Naive thymus-derived CD4-positive, alpha-beta T cell (primary cell): ENCODE measurements at regions of chr21 and their contacts with region 1.

Region 1: GRCh38 chr21:41283211-41283818 is 33.3 kb upstream of the FAM3B start:
- DNase-seq: peak in 7 of 9 donors; percentile 38 to 77 (median 67)
- ATAC-seq: peak; percentile 97
- H3K4me3 ChIP-seq: no peak overlapping the region
- H3K4me3 Mint-ChIP-seq: no peak overlapping the region
- H3K27ac ChIP-seq: no peak overlapping the region
- H3K27ac Mint-ChIP-seq: no peak overlapping the region
- H3K4me1 ChIP-seq: no peaks in the 10 kb centered on the region
- H3K4me1 Mint-ChIP-seq: peaks cover 0 to 4% (median 0%) of the 10 kb centered on the region in 7 donors
- H3K27me3 ChIP-seq: no peaks in the 10 kb centered on the region
- H3K27me3 Mint-ChIP-seq: peaks cover 8 to 28% (median 20%) of the 10 kb centered on the region in 5 donors

Region 2: DNA sequence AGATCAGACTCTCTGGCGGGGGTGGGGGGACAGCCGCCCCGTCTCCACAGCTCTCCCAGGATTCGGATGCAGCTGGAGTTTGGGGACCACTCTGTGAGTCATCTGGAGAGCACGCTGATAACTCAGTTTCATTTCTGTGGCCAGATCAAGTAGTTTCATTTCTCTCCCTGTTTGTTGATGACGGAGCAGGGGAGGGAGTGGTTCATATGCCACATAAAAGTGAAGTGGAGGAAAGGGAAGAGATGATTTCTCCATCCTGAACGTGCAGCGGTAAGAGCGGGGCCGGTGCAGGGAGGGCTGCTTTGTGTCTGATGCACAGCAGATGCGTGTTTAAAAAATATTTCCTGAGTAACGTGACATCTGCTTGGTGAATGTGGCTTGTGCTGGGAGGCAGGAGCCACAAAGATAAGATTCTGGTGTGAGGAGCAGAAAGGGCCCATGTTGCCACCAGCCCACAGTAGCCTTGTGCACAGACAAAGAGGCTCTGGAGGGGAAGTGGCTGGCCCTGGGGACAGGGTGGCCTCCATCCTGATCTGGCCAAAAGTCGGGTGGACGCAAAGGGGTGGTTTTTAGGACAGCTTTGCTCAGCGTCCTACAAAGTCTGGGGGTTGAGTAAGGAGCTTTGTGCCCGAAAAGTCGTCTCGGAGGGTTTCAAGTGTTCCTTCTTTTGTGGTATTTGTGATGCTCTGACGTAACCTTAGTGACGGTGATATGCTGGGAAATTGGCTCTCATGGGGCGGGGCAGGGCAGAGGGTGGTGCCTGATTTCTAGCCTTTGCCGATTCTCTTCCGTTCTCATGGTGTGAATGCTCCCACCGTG is 78.7 kb after region 1 on chr21 and contains the start of gene MX2:
- CTCF ChIA-PET with region 1: interaction called, 4 read pairs
- POLR2A ChIA-PET with region 1: no interaction called
- intact Hi-C with region 1: loop called (anchors 1 to 5 kb)
- DNase-seq: peak; percentile 64 to 96 (median 94)
- ATAC-seq: peak; percentile 86
- H3K4me3 ChIP-seq: peak within 1 kb of the TSS; percentile 84
- H3K4me3 Mint-ChIP-seq: peak within 1 kb of the TSS; percentile 90 to 98 (median 96)
- H3K27ac ChIP-seq: peak within 1 kb of the TSS; percentile 96
- H3K27ac Mint-ChIP-seq: peak within 1 kb of the TSS; percentile 99 to 100 (median 100)
- H3K4me1 ChIP-seq: peaks cover 21 to 38% of the 10 kb centered on the region in 2 donors
- H3K4me1 Mint-ChIP-seq: peaks cover 31 to 67% (median 60%) of the 10 kb centered on the region in 7 donors
- H3K27me3 ChIP-seq: no peaks in the 10 kb centered on the region
- H3K27me3 Mint-ChIP-seq: no peaks in the 10 kb centered on the region
- total RNA-seq, gene MX2: 84.8 to 116 (median 100) TPM

Region 3: DNA sequence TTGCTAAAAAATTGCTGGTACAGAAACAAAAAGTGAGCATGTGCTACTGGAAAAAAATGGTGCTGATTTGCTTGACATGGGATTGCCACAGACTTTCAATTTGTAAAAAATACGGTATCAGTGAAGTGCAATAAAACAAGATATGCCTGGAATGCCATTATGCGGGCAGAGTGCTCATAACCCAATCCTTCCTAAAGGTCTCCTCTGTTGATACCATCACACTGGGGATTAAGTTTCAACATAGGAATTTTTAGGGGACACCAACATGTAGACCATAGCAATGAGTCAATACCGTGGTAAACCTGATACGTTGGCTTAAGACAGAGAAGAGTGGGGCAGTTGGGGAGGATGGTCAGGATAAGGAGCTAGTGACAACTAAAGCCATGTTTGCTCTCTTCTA is 163.3 kb after region 1 on chr21:
- CTCF ChIA-PET with region 1: interaction called, 4 read pairs
- POLR2A ChIA-PET with region 1: no interaction called
- intact Hi-C with region 1: loop called in 1 of 2 experiments (anchors 5 kb)
- DNase-seq: no peak
- ATAC-seq: no peak
- H3K4me3 ChIP-seq: no peak overlapping the region
- H3K4me3 Mint-ChIP-seq: no peak overlapping the region
- H3K27ac ChIP-seq: no peak overlapping the region
- H3K27ac Mint-ChIP-seq: peak overlapping the region in 1 of 9 donors; percentile 21
- H3K4me1 ChIP-seq: no peaks in the 10 kb centered on the region
- H3K4me1 Mint-ChIP-seq: peaks cover 0 to 36% (median 0%) of the 10 kb centered on the region in 7 donors
- H3K27me3 ChIP-seq: no peaks in the 10 kb centered on the region
- H3K27me3 Mint-ChIP-seq: no peaks in the 10 kb centered on the region

Region 4: DNA sequence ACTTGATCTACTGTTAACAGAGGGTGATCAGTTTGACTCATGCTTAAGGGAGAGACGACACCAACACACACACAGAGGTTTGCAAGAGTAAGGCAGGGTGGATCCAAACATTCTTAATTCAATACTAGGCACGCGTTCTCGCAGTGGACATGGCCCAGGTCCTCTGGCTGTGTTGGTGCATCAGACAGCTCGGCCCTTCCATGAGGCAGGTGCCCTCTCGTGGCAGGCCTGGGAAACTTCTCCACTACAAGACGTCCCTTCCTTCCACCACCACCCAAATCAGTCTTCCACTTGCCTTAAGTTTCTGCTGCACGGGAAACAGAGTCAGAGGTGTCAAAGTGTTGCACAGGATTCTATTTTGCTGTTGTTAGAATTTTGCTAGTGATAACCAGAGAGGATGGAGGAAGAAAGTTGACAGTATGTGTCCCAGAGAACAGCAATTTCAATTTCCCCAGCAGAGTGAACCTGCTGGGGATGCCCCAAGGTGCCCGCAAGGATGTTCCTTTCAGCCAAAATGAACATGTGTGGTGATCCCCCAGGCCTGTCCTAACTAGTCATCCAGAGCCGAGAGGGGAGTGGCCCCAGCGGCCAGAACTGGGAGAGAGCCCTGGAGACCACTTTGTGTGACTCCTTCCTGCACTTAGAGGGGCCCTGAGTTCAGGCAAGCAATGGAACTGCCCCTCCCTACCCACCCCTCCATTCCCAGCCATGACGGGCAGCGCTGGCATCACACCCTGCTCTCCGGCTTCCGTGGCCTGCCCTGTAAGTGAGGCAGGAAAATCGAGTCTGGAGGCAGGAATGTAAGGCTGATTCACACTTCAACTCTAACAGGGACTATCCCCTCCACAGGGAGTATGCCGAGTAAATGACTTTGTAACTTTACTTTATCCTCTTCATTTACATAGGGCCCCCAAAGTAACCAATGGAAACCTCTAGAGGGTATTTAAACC is 177.5 kb after region 1 on chr21:
- CTCF ChIA-PET with region 1: interaction called, 65 read pairs
- POLR2A ChIA-PET with region 1: interaction called, 5 read pairs
- intact Hi-C with region 1: loop called in 1 of 2 experiments (anchors 1 kb)
- DNase-seq: peak; percentile 16 to 58 (median 41)
- ATAC-seq: peak; percentile 79
- H3K4me3 ChIP-seq: no peak overlapping the region
- H3K4me3 Mint-ChIP-seq: no peak overlapping the region
- H3K27ac ChIP-seq: no peak overlapping the region
- H3K27ac Mint-ChIP-seq: peak overlapping the region in 5 of 9 donors; percentile 49 to 86 (median 76)
- H3K4me1 ChIP-seq: no peaks in the 10 kb centered on the region
- H3K4me1 Mint-ChIP-seq: peaks cover 0 to 18% (median 2%) of the 10 kb centered on the region in 7 donors
- H3K27me3 ChIP-seq: no peaks in the 10 kb centered on the region
- H3K27me3 Mint-ChIP-seq: no peaks in the 10 kb centered on the region

Region 5: DNA sequence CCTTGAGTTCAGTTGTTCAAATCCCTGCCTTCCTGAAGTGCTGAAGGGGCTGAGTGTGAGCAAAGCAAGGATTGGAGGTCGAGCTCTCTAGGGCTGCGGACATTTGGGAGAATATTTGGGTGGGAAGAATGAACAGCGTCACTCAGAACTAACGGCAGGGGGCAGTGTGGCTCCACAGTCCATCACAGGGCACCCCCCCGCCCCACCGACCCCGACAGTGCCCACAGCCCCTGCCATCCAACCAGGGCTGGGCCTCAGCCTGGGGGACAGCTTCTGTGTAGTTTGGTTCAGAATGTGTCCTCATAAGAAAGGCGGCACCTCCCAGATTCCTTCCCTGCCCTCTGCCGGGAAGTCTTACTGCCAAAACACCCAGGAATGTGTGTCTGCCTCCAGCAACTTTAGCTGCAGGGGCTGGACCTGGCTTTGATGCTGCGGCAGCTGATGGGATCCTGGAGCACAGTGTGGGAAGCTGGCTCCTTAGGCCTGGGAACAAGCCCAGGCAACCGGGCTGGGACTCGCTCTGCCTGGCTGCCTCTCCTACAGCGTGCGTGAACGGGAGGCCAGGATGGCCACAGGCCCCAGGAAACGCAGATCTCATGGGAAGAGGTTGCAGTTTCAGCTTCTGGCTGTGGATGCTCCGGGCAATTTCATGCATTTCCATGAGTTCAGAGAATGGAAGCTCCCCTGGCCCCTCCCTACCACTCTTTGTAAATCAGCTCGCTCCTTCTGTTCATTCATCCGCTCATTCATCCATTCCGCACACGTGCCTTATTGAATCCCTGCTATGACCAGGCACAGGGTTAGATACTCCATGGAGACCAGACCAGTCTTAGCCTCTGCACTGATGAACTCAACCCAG is 329.6 kb after region 1 on chr21:
- CTCF ChIA-PET with region 1: no interaction called
- POLR2A ChIA-PET with region 1: no interaction called
- intact Hi-C with region 1: loop called in 1 of 2 experiments (anchors 10 kb)
- DNase-seq: no peak
- ATAC-seq: peak; percentile 42
- H3K4me3 ChIP-seq: no peak overlapping the region
- H3K4me3 Mint-ChIP-seq: peak overlapping the region in 1 of 10 donors; percentile 24
- H3K27ac ChIP-seq: no peak overlapping the region
- H3K27ac Mint-ChIP-seq: no peak overlapping the region
- H3K4me1 ChIP-seq: no peaks in the 10 kb centered on the region
- H3K4me1 Mint-ChIP-seq: no peaks in the 10 kb centered on the region
- H3K27me3 ChIP-seq: peaks cover 0 to 4% of the 10 kb centered on the region in 2 donors
- H3K27me3 Mint-ChIP-seq: peaks cover 20 to 62% (median 38%) of the 10 kb centered on the region in 5 donors

Region 6: DNA sequence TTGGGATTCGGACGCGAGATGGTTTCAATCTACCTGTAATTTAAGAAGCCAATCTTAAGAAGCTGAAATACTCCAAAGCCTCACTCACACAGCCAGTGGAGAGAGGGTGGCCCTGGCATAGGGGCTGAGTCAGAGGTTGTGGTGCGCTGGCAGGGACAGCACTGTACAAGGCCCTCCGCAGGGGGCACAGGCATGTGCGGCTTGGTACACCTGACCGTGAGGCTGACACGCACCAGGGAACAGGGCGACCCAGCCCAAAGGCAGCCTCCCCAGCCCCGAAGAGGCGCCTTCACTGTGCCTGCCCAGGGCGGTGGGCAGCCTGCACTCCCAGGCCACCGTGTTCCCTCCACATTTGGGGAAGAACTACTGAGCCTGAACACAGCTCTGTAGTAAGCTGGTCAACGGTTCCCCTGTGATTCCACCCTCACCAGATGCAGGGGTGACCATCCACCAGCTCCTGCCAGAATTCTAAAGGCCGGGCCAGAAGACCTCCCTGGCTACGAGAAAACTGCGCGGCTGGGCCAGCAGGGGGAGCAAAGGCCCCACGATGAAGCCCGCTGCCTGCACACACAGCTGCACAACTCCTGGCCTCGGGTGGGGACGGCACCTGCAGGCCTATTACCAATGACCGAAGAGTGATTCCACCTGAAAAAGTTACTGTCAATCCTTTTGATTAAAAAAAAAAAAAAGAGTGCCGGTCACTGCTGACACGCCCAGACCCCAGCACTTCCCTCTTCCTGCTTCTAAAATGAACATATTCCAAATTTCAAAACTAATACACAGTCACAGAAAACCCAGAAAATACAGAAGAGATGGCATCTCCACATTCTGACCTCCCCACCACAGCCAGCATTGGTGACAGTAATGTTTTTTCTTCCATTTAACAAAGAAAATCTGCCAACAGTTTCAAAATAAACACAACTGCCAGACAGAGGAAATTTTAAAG is 533.2 kb after region 1 on chr21:
- CTCF ChIA-PET with region 1: interaction called, 12 read pairs
- POLR2A ChIA-PET with region 1: no interaction called
- intact Hi-C with region 1: no loop called
- DNase-seq: peak; percentile 19 to 62 (median 47)
- ATAC-seq: peak; percentile 81
- H3K4me3 ChIP-seq: no peak overlapping the region
- H3K4me3 Mint-ChIP-seq: no peak overlapping the region
- H3K27ac ChIP-seq: no peak overlapping the region
- H3K27ac Mint-ChIP-seq: peak overlapping the region in 7 of 9 donors; percentile 1 to 76 (median 35)
- H3K4me1 ChIP-seq: no peaks in the 10 kb centered on the region
- H3K4me1 Mint-ChIP-seq: peaks cover 0 to 11% (median 10%) of the 10 kb centered on the region in 7 donors
- H3K27me3 ChIP-seq: no peaks in the 10 kb centered on the region
- H3K27me3 Mint-ChIP-seq: no peaks in the 10 kb centered on the region